Activated CD4-positive, alpha-beta memory T cell treated with anti-CD3 and anti-CD28 coated beads for 36 hours (primary cell): ENCODE measurements at regions of chr10 and their contacts with region 1.

Region 1: GRCh38 chr10:95133016-95133752 is 60.9 kb upstream of the ACSM6 start:
- DNase-seq: peak; percentile 81
- H3K4me3 Mint-ChIP-seq: no peak overlapping the region
- H3K27ac Mint-ChIP-seq: no peak overlapping the region
- H3K4me1 Mint-ChIP-seq: no peaks in the 10 kb centered on the region
- H3K27me3 Mint-ChIP-seq: peaks cover 1% of the 10 kb centered on the region

Region 2: GRCh38 chr10:95183271-95184230 is 50.4 kb after region 1 on chr10:
- CTCF ChIA-PET with region 1: no interaction called
- POLR2A ChIA-PET with region 1: no interaction called
- intact Hi-C with region 1: loop called (anchors 5 kb)
- DNase-seq: peak; percentile 82
- H3K4me3 Mint-ChIP-seq: peak overlapping the region; percentile 63
- H3K27ac Mint-ChIP-seq: no peak overlapping the region
- H3K4me1 Mint-ChIP-seq: peaks cover 6% of the 10 kb centered on the region
- H3K27me3 Mint-ChIP-seq: peaks cover 25% of the 10 kb centered on the region